ENCODE measurements at regions of chr6 and their contacts with region 1.

Region 1: DNA sequence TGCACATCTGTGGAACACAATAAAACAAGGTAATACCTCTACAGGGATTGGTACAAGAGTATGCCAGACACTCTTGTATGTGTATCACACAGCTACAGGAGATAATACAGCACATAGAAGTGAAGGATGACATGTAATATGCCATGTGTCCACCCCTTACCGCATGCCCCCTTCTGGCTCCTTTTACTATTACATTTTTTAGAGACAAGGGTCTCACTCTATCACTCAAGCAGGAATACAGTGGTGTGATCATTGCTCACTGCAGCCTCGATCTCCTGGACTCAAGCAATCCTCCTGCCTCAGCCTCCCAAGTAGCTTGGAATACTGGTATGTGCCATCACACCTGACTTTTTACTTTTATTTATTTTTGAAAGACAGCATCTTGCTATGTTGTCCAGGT is 4.2 kb upstream of the NCR3 start:
- DNase-seq: no peak
- H3K4me3 ChIP-seq: no peak overlapping the region
- H3K27ac ChIP-seq: no peak overlapping the region
- H3K4me1 ChIP-seq: no peaks in the 10 kb centered on the region
- H3K27me3 ChIP-seq: no peaks in the 10 kb centered on the region
- CTCF ChIP-seq: peak; percentile 53

Region 2: DNA sequence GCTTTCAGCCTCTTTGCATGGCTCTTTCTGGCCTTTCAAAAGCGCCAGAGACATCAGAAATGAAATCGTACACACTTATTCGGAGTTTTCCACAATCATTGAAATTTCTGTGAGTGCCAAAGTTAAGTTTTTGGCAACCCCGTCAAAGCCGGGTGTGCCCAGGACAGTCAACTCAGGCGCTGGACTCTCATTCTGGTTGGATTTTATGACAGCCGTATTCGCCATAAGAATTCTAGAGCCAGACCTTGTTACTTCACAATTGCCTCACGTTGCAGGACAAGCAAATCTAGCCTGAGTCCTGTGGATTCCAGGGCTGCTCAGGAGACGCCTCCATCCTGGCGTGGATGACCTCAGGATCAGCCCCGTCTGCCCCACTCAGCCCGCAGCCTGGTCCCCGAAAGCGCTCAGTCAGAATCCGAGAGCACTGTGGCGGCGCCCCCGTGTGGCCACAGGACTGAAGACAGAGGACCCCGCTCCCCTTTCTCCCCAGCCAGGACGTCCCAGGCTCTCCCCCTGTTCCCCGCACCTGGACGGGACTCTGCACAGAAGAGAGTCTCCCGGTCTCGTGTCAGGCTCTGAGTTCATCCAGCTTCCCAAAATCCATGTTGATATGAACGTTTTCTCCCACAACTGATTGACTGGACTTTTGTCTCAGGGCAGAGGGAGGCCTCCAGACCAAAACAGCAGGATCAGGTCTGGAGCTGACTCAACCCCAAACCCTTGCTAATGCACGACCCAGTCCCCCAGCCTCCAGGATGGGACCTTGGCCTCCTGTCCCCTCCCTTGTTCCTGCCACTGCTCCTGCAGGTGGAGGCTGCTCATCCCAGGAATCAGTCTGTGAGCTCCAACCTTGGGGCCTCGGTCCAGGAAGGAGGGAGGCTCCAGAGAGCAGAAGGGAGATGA is 155.4 kb before region 1 on chr6:
- CTCF ChIA-PET with region 1: no interaction called
- POLR2A ChIA-PET with region 1: no interaction called
- intact Hi-C with region 1: loop called (anchors 1 kb)
- DNase-seq: peak in 1 of 2 experiments; percentile 74
- H3K4me3 ChIP-seq: no peak overlapping the region
- H3K27ac ChIP-seq: no peak overlapping the region
- H3K4me1 ChIP-seq: no peaks in the 10 kb centered on the region
- H3K27me3 ChIP-seq: peaks cover 17% of the 10 kb centered on the region
- CTCF ChIP-seq: peak; percentile 82

Region 3: GRCh38 chr6:31580807-31581433 is 16.1 kb before region 1 on chr6:
- CTCF ChIA-PET with region 1: interaction called, 11 read pairs
- POLR2A ChIA-PET with region 1: no interaction called
- intact Hi-C with region 1: no loop called
- DNase-seq: peak in 1 of 2 experiments; percentile 80
- H3K4me3 ChIP-seq: peak overlapping the region; percentile 71
- H3K27ac ChIP-seq: no peak overlapping the region
- H3K4me1 ChIP-seq: 0 out of 2 replicates have a peak, but pooled peaks cover 5% of the 10 kb centered on the region
- H3K27me3 ChIP-seq: 0 out of 2 replicates have a peak, but pooled peaks cover under 1% of the 10 kb centered on the region
- CTCF ChIP-seq: peak; percentile 95

Measured in PC-9 (cell line).